HEK293 (cell line): ENCODE measurements at regions of chr1 and their contacts with region 1.

Region 1: DNA sequence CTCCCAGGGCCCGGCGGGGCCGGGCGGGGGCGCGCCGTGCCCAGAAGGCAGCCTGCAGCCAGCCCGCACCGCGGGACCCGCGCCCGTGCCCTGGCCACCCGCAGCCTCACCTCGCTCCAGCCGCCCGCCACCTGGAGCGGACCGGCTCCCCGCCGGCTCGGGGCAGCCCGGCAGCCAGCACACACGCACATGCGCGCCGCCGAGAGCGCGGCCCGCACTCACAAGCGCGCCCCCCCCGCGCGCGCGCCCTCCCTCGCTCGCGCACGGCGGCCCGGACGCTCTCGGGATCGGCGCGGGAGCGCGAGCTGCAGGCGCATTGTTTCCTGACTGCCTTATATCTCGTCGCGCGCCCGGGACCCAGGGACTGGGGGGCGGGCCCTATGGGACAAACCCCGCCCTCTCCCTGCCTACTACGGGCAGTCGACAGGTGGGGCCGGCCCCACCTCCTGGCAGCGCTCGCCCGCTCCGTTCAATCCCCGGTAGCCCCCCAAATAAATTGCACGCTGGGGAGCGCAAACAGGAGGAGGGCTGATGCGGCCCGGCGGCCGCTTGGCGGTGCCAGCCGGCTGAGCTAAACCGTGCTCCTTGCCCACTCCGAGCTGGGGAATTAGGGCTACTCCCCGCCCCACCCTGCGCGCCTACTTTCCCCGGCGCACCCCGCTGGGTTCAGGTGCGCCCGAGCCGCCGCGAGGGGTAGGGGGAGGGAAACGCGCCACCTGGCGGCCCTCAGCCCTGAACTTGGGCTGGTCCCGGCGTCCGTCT is at the start of gene MYCL:
- H3K4me3 ChIP-seq: peak within 1 kb of the TSS; percentile 73
- H3K27ac ChIP-seq: peak within 1 kb of the TSS; percentile 48; the same call in 1 of the 2 replicates
- H3K4me1 ChIP-seq: 0 out of 2 replicates have a peak, but pooled peaks cover 2% of the 10 kb centered on the region
- CTCF ChIP-seq: peak; percentile 96

Region 2: GRCh38 chr1:39691262-39692151 is 210.4 kb before region 1 on chr1 and contains the start of gene HPCAL4:
- CTCF ChIA-PET with region 1: no interaction called
- POLR2A ChIA-PET with region 1: no interaction called
- H3K4me3 ChIP-seq: peak within 1 kb of the TSS; percentile 25
- H3K27ac ChIP-seq: no peak within 1 kb of the TSS
- H3K4me1 ChIP-seq: no peaks in the 10 kb centered on the region
- CTCF ChIP-seq: 0 out of 2 replicates have a peak, but pooled peaks have one; percentile 4

Region 3: GRCh38 chr1:39816415-39817090 is 85.3 kb before region 1 on chr1:
- CTCF ChIA-PET with region 1: interaction called, 69 read pairs
- POLR2A ChIA-PET with region 1: no interaction called
- H3K4me3 ChIP-seq: no peak overlapping the region
- H3K27ac ChIP-seq: no peak overlapping the region
- H3K4me1 ChIP-seq: no peaks in the 10 kb centered on the region
- CTCF ChIP-seq: peak; percentile 76

Region 4: DNA sequence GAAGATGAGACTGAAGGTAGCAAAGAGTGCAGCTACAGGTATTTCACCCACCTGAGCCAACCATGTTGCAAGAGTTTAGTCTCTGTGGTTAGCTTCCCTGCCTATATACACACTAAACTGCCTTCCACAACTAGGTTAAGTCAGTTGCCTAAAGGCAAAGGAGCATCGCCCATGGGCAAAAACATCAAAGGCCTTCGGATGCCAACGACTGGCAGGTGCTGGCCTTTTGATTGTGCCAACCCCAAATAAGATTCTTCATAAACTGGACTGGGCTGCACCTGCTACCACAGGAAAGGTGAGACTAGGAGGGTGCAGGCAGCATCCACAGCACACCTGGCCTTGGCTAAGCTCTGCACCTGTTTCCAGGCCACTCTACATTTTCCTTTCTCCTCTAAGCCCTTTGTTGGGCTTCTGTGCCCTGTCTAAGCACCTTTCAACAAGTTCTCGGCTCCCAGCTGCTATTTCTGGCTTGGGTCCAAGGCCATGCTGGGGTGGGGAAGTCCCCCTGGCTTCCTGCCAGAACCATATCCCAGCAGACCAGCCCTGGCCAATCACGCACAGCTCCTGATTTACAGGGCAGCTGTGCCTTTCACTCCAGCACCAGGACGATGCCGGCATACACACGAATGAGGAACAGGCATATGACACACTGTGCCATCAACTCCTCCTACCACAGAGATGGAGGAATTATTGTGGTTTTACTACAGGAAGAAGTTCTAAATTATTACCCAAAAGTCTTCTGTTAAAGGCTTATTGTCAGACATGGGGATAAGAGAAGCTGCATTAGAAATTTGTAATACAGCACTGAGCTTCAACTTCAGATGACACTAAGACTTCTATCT is 56.4 kb before region 1 on chr1:
- CTCF ChIA-PET with region 1: interaction called, 11 read pairs
- POLR2A ChIA-PET with region 1: interaction called, 6 read pairs
- H3K4me3 ChIP-seq: no peak overlapping the region
- H3K27ac ChIP-seq: no peak overlapping the region
- H3K4me1 ChIP-seq: peaks cover 12% of the 10 kb centered on the region
- CTCF ChIP-seq: no peak

Region 5: DNA sequence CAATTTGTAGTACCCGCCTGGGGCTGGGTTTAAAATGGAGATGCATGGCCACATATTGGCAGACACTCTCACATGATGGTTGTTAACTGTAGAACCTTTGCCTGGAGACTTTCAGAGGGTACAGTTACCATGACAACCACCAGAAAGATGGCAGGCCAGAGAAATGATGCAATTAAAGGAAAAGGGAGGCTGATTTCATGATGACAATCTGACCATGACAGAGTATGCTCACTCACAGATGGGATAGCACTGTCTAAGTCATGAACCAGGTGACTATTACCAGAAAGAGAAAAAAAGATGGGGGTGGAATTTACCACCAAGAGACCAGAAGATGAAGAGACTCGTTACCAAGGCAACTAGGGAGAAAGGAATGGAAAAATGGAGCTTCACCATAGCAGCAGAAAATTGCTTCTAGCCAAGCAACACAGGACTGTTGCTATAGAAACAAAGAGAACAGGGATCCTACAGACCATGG is 15.1 kb before region 1 on chr1:
- CTCF ChIA-PET with region 1: interaction called, 7 read pairs
- POLR2A ChIA-PET with region 1: interaction called, 22 read pairs
- H3K4me3 ChIP-seq: no peak overlapping the region
- H3K27ac ChIP-seq: no peak overlapping the region
- H3K4me1 ChIP-seq: peaks cover 5% of the 10 kb centered on the region; the same call in 1 of the 2 replicates
- CTCF ChIP-seq: no peak

Region 6: DNA sequence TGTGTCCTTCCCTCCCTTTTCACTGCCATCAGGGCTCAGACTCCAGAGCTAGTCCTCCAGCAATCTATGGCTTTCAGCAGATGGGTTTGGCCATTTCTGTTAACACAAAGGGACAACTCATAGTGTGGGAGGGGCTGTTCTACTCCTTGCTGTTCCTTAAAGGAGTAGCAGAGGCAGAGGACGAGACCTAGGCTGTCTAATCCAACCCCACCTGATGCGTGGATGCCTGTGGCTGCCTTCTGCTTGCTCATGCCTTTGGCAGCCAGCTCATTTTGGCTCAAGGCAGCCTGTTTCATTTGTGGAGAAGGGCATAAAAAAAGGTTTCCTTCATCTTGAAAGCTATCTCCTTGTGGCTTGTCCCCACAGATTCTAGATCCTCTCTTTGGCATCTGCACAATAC is 80.1 kb after region 1 on chr1:
- CTCF ChIA-PET with region 1: no interaction called
- POLR2A ChIA-PET with region 1: no interaction called
- H3K4me3 ChIP-seq: no peak overlapping the region
- H3K27ac ChIP-seq: no peak overlapping the region
- H3K4me1 ChIP-seq: no peaks in the 10 kb centered on the region
- CTCF ChIP-seq: no peak

Region 7: GRCh38 chr1:40096977-40097782 is 195.3 kb after region 1 on chr1 and contains the start of gene PPT1:
- CTCF ChIA-PET with region 1: no interaction called
- POLR2A ChIA-PET with region 1: no interaction called
- H3K4me3 ChIP-seq: peak within 1 kb of the TSS; percentile 74
- H3K27ac ChIP-seq: no peak within 1 kb of the TSS; the same call in 1 of the 2 replicates
- H3K4me1 ChIP-seq: no peaks in the 10 kb centered on the region; the same call in 1 of the 2 replicates
- CTCF ChIP-seq: peak; percentile 75

Region 8: GRCh38 chr1:40352126-40352525 is 450.2 kb after region 1 on chr1:
- CTCF ChIA-PET with region 1: no interaction called
- POLR2A ChIA-PET with region 1: interaction called, 11 read pairs
- H3K4me3 ChIP-seq: no peak overlapping the region
- H3K27ac ChIP-seq: no peak overlapping the region
- H3K4me1 ChIP-seq: no peaks in the 10 kb centered on the region
- CTCF ChIP-seq: no peak